HCT116 (cell line): ENCODE measurements at regions of chr1 and their contacts with region 1.

Region 1: GRCh38 chr1:17922833-17923232 is 167.7 kb downstream of the ACTL8 start:
- DNase-seq: peak; percentile 24
- ATAC-seq: peak; percentile 75
- H3K4me3 ChIP-seq: no peak overlapping the region
- H3K27ac ChIP-seq: no peak overlapping the region
- H3K4me1 ChIP-seq: no peaks in the 10 kb centered on the region
- H3K27me3 ChIP-seq: peaks cover 42% of the 10 kb centered on the region; the same call in 1 of the 2 replicates
- CTCF ChIP-seq: peak; percentile 80 to 83 (median 82)
- POLR2A ChIP-seq: no peak
- RAD21 ChIP-seq: peak; percentile 87

Region 2: DNA sequence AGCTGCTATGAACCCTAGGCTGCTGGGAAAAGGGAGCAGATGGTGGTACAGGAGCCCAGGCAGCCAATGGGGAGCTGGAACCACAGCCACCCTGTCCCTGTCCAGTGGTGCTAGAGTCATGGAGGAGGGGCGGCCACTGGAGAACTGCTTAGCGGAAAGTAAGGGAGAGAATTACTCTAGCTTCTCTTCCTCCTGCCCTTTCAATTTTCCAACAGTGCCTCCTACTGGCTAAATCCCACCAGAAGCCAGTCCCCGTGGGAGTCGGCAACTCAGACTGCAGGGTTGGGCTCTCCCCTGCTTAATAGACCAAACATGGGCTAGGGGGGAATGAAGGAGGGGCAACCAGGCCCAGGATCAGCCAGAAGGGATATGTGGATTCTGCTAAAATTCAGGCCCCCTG is 13.2 kb before region 1 on chr1:
- CTCF ChIA-PET with region 1: interaction called, 10 read pairs
- POLR2A ChIA-PET with region 1: no interaction called
- RAD21 ChIA-PET with region 1: no interaction called
- intact Hi-C with region 1: no loop called
- DNase-seq: no peak
- ATAC-seq: peak; percentile 27; the same call in 1 of the 2 replicates
- H3K4me3 ChIP-seq: no peak overlapping the region
- H3K27ac ChIP-seq: no peak overlapping the region
- H3K4me1 ChIP-seq: no peaks in the 10 kb centered on the region
- H3K27me3 ChIP-seq: peaks cover 78% of the 10 kb centered on the region
- CTCF ChIP-seq: peak in 2 of 3 experiments; percentile 25 to 34; a peak in 3 of 6 replicates
- POLR2A ChIP-seq: no peak
- RAD21 ChIP-seq: peak; percentile 44

Region 3: DNA sequence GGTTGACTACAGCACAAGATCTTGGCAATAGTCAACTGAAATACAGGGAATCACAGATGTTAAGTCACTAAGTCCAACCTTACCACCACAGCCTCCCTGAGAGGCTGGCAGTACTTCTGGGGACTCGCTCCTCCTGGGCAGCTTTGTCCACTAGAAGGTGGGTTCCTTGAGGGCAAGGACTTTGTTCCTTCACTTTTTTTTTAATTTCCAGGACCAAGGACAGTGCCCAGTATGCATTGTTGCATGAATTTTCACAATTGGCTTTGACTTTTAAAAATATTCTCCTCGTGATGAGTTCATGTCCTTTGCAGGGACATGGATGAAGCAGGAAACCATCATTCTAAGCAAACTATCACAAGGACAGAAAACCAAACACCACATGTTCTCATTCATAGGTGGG is 88.1 kb after region 1 on chr1:
- CTCF ChIA-PET with region 1: no interaction called
- POLR2A ChIA-PET with region 1: no interaction called
- RAD21 ChIA-PET with region 1: no interaction called
- intact Hi-C with region 1: no loop called
- DNase-seq: no peak
- ATAC-seq: no peak
- H3K4me3 ChIP-seq: no peak overlapping the region
- H3K27ac ChIP-seq: no peak overlapping the region
- H3K4me1 ChIP-seq: no peaks in the 10 kb centered on the region
- H3K27me3 ChIP-seq: peaks cover 56% of the 10 kb centered on the region
- CTCF ChIP-seq: no peak
- POLR2A ChIP-seq: no peak
- RAD21 ChIP-seq: no peak

Region 4: GRCh38 chr1:18100491-18101063 is 177.7 kb after region 1 on chr1:
- CTCF ChIA-PET with region 1: interaction called, 23 read pairs
- POLR2A ChIA-PET with region 1: no interaction called
- RAD21 ChIA-PET with region 1: interaction called in 1 of 2 experiments, 4 read pairs
- intact Hi-C with region 1: loop called (anchors 1 kb)
- DNase-seq: peak; percentile 50
- ATAC-seq: peak; percentile 84
- H3K4me3 ChIP-seq: no peak overlapping the region
- H3K27ac ChIP-seq: no peak overlapping the region
- H3K4me1 ChIP-seq: 0 out of 4 replicates have a peak, but pooled peaks cover 0 to 2% of the 10 kb centered on the region in 2 experiments
- H3K27me3 ChIP-seq: peaks cover 20% of the 10 kb centered on the region
- CTCF ChIP-seq: peak; percentile 65 to 77 (median 76)
- POLR2A ChIP-seq: no peak
- RAD21 ChIP-seq: peak; percentile 72

Region 5: GRCh38 chr1:18217398-18218043 is 294.7 kb after region 1 on chr1:
- CTCF ChIA-PET with region 1: interaction called, 3 read pairs
- POLR2A ChIA-PET with region 1: no interaction called
- RAD21 ChIA-PET with region 1: no interaction called
- intact Hi-C with region 1: loop called (anchors 1 kb)
- DNase-seq: peak; percentile 31
- ATAC-seq: peak; percentile 89
- H3K4me3 ChIP-seq: no peak overlapping the region
- H3K27ac ChIP-seq: no peak overlapping the region
- H3K4me1 ChIP-seq: no peaks in the 10 kb centered on the region
- H3K27me3 ChIP-seq: peaks cover 51% of the 10 kb centered on the region
- CTCF ChIP-seq: peak; percentile 56 to 78 (median 71); a peak in 5 of 6 replicates
- POLR2A ChIP-seq: no peak
- RAD21 ChIP-seq: peak; percentile 63; the same call in 1 of the 2 replicates

Region 6: GRCh38 chr1:18575620-18576019 is 652.8 kb after region 1 on chr1:
- CTCF ChIA-PET with region 1: interaction called, 12 read pairs
- POLR2A ChIA-PET with region 1: no interaction called
- RAD21 ChIA-PET with region 1: no interaction called
- intact Hi-C with region 1: loop called (anchors 2 kb)
- DNase-seq: peak; percentile 38
- ATAC-seq: peak; percentile 91
- H3K4me3 ChIP-seq: no peak overlapping the region
- H3K27ac ChIP-seq: no peak overlapping the region
- H3K4me1 ChIP-seq: peaks cover 0 to 4% of the 10 kb centered on the region in 2 experiments; a peak in 1 of 4 replicates
- H3K27me3 ChIP-seq: peaks cover 5% of the 10 kb centered on the region; the same call in 1 of the 2 replicates
- CTCF ChIP-seq: peak; percentile 71 to 94 (median 91)
- POLR2A ChIP-seq: no peak
- RAD21 ChIP-seq: peak; percentile 88